H1 (cell line): ENCODE measurements at regions of chr1 and their contacts with region 1.

Region 1: DNA sequence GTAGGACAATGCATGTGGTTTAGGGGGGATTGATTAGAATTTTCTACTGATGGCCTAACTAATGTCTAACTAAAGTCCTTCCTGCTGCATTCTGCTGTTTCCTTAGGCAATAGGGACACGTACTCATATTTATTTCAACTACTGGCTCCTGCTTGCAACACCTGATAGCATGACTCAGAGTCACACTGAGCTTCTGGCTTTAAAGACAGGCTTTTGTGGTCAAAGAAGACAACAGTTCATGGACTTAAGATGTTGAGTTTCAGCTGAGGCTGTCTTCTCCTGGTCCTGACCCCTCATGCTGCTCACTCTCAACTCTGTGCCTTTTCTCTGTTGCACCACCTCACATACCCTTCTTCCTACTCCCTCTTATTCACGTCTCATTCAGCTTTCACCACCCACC is 29.1 kb upstream of the TRABD2B start:
- DNase-seq: no peak
- H3K4me3 ChIP-seq: no peak overlapping the region
- H3K27ac ChIP-seq: no peak overlapping the region
- H3K4me1 ChIP-seq: peaks cover 0 to 10% (median 5%) of the 10 kb centered on the region in 4 experiments; a peak in 4 of 7 replicates
- H3K27me3 ChIP-seq: no peaks in the 10 kb centered on the region
- CTCF ChIP-seq: no peak
- EP300 ChIP-seq: no peak
- POLR2A ChIP-seq: no peak
- RAD21 ChIP-seq: no peak

Region 2: DNA sequence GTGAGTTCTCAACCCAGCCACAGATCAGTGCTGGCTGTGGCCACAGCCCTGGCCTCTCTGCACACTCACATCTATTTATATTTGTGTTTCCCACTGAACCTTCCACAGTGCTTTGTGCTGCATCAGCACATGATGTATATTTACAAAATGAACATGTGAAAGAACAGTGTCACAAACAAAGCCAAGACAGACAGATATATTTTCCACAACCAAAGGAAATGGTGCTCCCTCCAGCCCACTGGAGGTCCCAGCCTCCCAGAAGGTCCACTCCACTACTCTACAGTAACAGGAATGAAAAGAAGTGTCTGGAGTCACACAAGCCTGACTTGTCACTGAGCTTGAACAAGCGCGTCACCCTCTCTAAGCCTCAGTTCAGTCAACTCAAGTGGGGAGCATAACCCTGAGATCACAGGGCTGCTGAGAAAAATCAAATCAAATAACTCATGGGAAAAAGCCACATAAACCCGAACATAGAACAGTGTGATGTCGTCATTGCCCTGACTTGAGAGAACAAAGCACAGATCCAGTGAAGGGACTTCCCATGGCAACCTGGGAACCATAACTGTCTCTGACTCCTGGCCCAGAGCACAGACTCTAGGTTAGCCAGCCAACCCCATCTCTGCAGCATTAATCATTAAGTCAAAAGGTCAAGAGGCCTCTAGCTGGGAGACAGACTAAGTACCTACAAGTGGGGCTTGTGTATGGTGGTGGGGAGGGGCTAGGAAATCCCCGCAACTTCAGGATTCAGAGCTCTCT is 150.3 kb before region 1 on chr1:
- CTCF ChIA-PET with region 1: no interaction called
- POLR2A ChIA-PET with region 1: no interaction called
- DNase-seq: no peak
- H3K4me3 ChIP-seq: no peak overlapping the region
- H3K27ac ChIP-seq: no peak overlapping the region
- H3K4me1 ChIP-seq: no peaks in the 10 kb centered on the region; a peak in 1 of 7 replicates
- H3K27me3 ChIP-seq: no peaks in the 10 kb centered on the region; a peak in 1 of 7 replicates
- CTCF ChIP-seq: no peak
- EP300 ChIP-seq: no peak
- POLR2A ChIP-seq: no peak
- RAD21 ChIP-seq: no peak

Region 3: GRCh38 chr1:48039088-48040054 is 13.1 kb after region 1 on chr1:
- CTCF ChIA-PET with region 1: interaction called, 13 read pairs
- POLR2A ChIA-PET with region 1: no interaction called
- DNase-seq: no peak
- H3K4me3 ChIP-seq: no peak overlapping the region
- H3K27ac ChIP-seq: no peak overlapping the region
- H3K4me1 ChIP-seq: peaks cover 6 to 14% (median 11%) of the 10 kb centered on the region in 4 experiments
- H3K27me3 ChIP-seq: no peaks in the 10 kb centered on the region
- CTCF ChIP-seq: no peak
- EP300 ChIP-seq: no peak
- POLR2A ChIP-seq: no peak
- RAD21 ChIP-seq: no peak